ENCODE measurements at regions of chr7 and their contacts with region 1.

Region 1: DNA sequence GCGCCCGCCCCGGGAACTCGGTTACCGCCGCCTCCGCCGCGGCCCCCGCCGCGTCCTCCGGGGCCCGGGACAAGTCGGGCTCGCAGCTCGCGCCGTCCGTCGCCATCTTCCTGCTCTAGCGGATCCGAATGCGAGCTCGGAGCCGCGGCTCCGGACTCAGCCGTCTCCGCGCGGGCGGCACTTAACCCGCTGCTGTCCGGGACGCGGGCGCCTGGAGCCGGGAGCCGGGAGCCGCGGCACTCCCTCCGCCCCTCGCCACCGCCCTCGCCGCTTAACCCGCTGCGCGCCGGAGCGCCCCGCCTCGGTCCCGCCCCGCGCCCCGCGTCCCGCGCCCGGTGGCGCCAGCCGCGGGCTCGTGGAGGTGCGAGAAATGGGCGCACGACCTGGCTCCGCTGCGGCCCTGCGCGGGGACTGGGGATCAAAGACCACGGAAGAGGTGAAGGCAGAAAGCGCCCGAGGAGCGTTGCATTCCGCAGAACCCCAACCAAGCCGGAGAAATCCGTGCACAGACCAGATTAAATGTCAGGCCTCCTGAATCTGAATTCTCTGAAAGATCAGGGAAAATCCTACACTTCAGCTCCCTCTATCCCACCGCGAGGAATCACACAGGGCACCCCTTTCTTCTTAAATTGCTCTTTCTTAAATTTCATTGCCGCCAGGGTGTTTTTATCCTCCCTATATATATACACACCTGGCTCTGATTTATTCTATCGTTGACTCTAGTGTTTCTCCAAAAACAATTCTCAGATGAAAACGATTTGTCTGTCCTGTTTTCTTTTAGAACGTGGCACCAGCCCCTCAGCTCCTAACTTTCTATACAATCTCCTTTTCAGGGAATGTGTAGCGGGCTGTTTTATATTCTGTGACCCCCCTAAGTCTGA is at the start of gene CTTNBP2:
- DNase-seq: peak; percentile 28
- ATAC-seq: peak; percentile 69
- H3K4me3 ChIP-seq: peak within 1 kb of the TSS; percentile 71
- H3K27ac ChIP-seq: no peak within 1 kb of the TSS
- H3K4me1 ChIP-seq: 0 out of 2 replicates have a peak, but pooled peaks cover 6% of the 10 kb centered on the region
- H3K27me3 ChIP-seq: peaks cover 28% of the 10 kb centered on the region
- CTCF ChIP-seq: 0 out of 2 replicates have a peak, but pooled peaks have one; percentile 12
- total RNA-seq, gene CTTNBP2: 1.0 and 1.1 TPM in 2 replicates

Region 2: GRCh38 chr7:117750612-117751563 is 122.7 kb before region 1 on chr7:
- CTCF ChIA-PET with region 1: interaction called, 3 read pairs
- POLR2A ChIA-PET with region 1: no interaction called
- intact Hi-C with region 1: loop called (anchors 1 kb)
- DNase-seq: peak; percentile 48
- ATAC-seq: peak; percentile 24; the same call in 1 of the 2 replicates
- H3K4me3 ChIP-seq: no peak overlapping the region
- H3K27ac ChIP-seq: no peak overlapping the region
- H3K4me1 ChIP-seq: no peaks in the 10 kb centered on the region; the same call in 1 of the 2 replicates
- H3K27me3 ChIP-seq: no peaks in the 10 kb centered on the region
- CTCF ChIP-seq: peak; percentile 71

Region 3: GRCh38 chr7:117949232-117949631 is 75.7 kb after region 1 on chr7:
- CTCF ChIA-PET with region 1: interaction called, 4 read pairs
- POLR2A ChIA-PET with region 1: no interaction called
- intact Hi-C with region 1: loop called (anchors 1 kb)
- DNase-seq: peak; percentile 93
- ATAC-seq: peak; percentile 76
- H3K4me3 ChIP-seq: no peak overlapping the region
- H3K27ac ChIP-seq: peak overlapping the region; percentile 92
- H3K4me1 ChIP-seq: peaks cover 67% of the 10 kb centered on the region
- H3K27me3 ChIP-seq: no peaks in the 10 kb centered on the region
- CTCF ChIP-seq: peak; percentile 54

Region 4: GRCh38 chr7:118057404-118057803 is 183.9 kb after region 1 on chr7:
- CTCF ChIA-PET with region 1: no interaction called
- POLR2A ChIA-PET with region 1: no interaction called
- intact Hi-C with region 1: no loop called
- DNase-seq: peak; percentile 38
- ATAC-seq: peak; percentile 54
- H3K4me3 ChIP-seq: no peak overlapping the region
- H3K27ac ChIP-seq: no peak overlapping the region
- H3K4me1 ChIP-seq: no peaks in the 10 kb centered on the region
- H3K27me3 ChIP-seq: no peaks in the 10 kb centered on the region
- CTCF ChIP-seq: no peak

Region 5: DNA sequence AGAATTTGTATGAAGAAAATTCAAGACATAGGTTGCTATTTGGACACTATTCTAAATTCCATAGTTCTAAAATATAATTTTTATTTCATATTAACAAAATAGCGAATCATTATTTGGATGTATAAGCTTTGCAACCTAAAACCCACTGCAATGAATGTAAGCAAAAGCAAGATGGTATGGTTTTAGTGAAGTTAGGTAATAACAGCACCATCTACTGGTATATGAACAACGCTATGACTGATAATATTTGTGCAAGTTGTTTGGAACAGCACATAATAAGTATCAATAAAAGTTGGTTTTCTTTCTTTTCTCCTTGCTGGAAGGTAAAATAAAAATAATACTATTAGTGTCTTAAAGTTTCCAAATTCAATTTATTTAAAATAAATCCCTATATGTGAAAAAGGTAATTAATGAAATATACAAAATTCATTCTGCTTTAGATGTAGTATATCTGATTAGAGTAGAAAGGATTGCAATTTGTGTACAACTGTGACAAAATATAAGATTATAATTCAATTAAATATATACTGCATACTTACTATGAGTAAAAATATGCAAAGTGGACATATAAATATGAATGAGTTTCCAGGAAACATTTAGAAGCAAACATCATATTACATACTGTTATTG is 231.4 kb after region 1 on chr7:
- CTCF ChIA-PET with region 1: no interaction called
- POLR2A ChIA-PET with region 1: no interaction called
- intact Hi-C with region 1: loop called (anchors 2 kb)
- DNase-seq: peak; percentile 54
- ATAC-seq: peak; percentile 77
- H3K4me3 ChIP-seq: no peak overlapping the region
- H3K27ac ChIP-seq: no peak overlapping the region
- H3K4me1 ChIP-seq: peaks cover 5% of the 10 kb centered on the region; the same call in 1 of the 2 replicates
- H3K27me3 ChIP-seq: no peaks in the 10 kb centered on the region
- CTCF ChIP-seq: peak; percentile 70

Region 6: DNA sequence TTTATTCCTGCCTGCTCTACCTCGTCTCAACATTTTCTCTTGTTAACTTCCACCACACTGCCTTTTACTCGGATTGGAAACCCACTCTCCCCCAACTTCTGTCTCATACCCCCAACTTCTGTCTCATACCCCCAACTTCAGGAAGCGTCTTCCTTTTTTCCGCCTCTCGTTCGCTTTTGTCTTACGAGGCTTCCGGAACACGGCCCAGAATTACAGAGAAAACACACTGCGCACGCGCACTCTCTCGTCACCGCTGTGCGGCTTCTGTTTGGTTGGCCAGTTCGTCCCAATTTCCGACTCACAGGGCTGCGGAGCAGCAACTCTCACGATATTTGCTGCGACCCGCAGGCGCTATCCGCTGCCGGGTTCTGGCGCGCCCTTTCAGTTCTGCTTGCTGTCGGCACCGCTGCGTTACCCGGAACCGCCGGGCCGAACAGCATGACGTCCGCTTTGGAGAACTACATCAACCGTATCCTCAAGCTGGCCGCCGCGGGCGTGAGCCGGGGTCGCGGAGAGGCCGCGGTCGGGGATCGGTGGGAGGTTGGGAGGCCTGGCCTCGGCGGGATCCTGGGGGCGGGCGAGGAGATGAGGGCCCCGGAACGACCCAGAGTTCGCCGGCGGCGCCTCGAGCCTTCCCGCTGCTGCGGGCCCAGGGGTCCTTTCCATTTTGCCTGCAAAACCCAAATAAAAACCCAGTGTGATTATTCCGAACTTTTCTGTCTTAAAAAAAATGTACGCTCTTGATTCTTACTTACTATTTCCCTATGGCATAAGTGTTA is 310.4 kb after region 1 on chr7 and contains the start of gene LSM8:
- CTCF ChIA-PET with region 1: no interaction called
- POLR2A ChIA-PET with region 1: no interaction called
- intact Hi-C with region 1: loop called (anchors 2 kb)
- DNase-seq: peak; percentile 98
- ATAC-seq: peak; percentile 97
- H3K4me3 ChIP-seq: peak within 1 kb of the TSS; percentile 100
- H3K27ac ChIP-seq: peak within 1 kb of the TSS; percentile 61
- H3K4me1 ChIP-seq: peaks cover 21% of the 10 kb centered on the region; the same call in 1 of the 2 replicates
- H3K27me3 ChIP-seq: no peaks in the 10 kb centered on the region
- CTCF ChIP-seq: no peak
- total RNA-seq, gene LSM8: 41.2 and 55.1 TPM in 2 replicates

Measured in PC-3 (cell line).